WTC11 (cell line): ENCODE measurements at regions of chr3 and their contacts with region 1.

Region 1: DNA sequence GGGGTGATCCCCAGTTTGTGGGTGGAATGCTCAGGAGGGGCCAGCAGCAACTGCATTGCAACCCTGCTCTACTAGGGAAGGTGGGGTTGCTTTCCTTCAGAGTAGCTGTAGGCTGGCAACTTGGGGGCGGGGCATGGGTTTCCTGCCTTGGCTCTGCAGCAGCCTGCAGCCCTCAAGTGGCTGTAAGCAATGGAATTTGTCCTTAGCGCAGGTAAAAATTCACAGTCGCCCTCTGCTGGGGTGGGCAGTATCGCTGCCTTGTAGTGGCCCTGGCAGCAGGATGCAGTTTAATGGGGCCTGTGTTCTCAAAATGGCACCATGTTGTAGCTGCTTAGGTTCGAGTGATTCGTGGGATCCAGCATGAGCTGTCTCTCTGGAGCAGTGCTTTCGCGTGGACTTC is 29.8 kb downstream of the STT3B start:
- DNase-seq: peak; percentile 85
- ATAC-seq: peak; percentile 92
- H3K4me3 Mint-ChIP-seq: no peak overlapping the region
- H3K27ac Mint-ChIP-seq: peak overlapping the region; percentile 78; the same call in 1 of the 2 replicates
- H3K4me1 Mint-ChIP-seq: peaks cover 65% of the 10 kb centered on the region
- H3K27me3 Mint-ChIP-seq: no peaks in the 10 kb centered on the region
- CTCF ChIP-seq: no peak; the same call in 1 of the 2 replicates

Region 2: DNA sequence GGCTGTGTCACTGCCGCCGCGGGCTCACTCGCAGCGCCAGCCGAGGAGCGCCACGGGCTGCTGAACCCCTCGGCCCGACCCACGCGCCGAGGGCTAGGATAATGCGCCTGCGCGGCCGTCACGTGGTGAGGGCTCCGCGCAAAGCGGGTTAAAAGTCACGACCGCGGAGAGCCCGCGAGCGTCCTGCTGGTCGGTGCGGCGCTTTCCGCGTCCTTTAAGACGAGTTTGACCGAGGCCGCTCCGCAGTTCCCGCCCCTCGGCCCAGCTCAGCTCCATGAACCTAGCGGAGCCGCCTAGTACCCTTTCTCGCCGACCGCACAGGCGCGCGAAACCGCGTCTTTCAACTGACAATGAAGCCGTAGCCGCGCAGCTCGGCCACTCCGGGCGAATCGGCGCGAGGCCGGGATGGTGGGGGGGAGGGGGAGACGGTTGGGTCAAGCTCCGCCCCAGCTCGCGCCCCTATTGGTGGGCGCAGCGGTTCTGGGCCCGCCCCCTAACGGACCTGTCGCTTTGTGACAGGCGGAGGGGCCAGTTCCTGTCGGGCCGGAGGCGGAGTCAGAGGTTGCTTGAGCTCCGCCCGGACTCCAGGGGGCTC is 30.4 kb before region 1 on chr3:
- CTCF ChIA-PET with region 1: interaction called, 38 read pairs
- POLR2A ChIA-PET with region 1: interaction called, 4 read pairs
- DNase-seq: peak; percentile 99
- ATAC-seq: peak; percentile 95
- H3K4me3 Mint-ChIP-seq: no peak overlapping the region
- H3K27ac Mint-ChIP-seq: peak overlapping the region; percentile 98
- H3K4me1 Mint-ChIP-seq: peaks cover 25% of the 10 kb centered on the region
- H3K27me3 Mint-ChIP-seq: no peaks in the 10 kb centered on the region
- CTCF ChIP-seq: no peak

Region 3: GRCh38 chr3:31550452-31551251 is 11.9 kb before region 1 on chr3:
- CTCF ChIA-PET with region 1: interaction called, 13 read pairs
- POLR2A ChIA-PET with region 1: interaction called, 3 read pairs
- DNase-seq: no peak
- ATAC-seq: peak; percentile 73; the same call in 1 of the 2 replicates
- H3K4me3 Mint-ChIP-seq: no peak overlapping the region
- H3K27ac Mint-ChIP-seq: no peak overlapping the region
- H3K4me1 Mint-ChIP-seq: peaks cover 56% of the 10 kb centered on the region
- H3K27me3 Mint-ChIP-seq: no peaks in the 10 kb centered on the region
- CTCF ChIP-seq: no peak

Region 4: DNA sequence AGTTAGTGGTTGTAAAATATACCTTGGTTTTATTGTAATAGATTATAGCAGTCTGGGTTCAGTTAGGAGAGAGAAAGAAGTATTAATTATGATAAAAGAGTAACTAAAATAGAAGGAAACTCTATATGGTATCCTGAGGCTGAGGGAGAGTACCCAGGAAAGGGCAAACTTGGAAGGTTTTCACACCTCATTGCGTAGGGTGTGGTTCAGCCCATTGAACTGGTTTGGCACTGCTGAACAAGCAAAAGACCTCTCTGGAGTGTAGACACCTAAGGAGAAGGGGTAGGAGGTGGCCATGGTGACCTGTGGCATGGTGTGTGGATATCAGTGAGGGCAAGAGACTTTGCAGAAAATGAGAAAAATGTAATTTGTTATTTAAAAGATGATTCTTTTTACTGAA is 33.7 kb after region 1 on chr3:
- CTCF ChIA-PET with region 1: interaction called, 10 read pairs
- POLR2A ChIA-PET with region 1: no interaction called
- DNase-seq: no peak
- ATAC-seq: no peak
- H3K4me3 Mint-ChIP-seq: no peak overlapping the region
- H3K27ac Mint-ChIP-seq: peak overlapping the region; percentile 24; the same call in 1 of the 2 replicates
- H3K4me1 Mint-ChIP-seq: peaks cover 4% of the 10 kb centered on the region; the same call in 1 of the 2 replicates
- H3K27me3 Mint-ChIP-seq: no peaks in the 10 kb centered on the region
- CTCF ChIP-seq: no peak

Region 5: DNA sequence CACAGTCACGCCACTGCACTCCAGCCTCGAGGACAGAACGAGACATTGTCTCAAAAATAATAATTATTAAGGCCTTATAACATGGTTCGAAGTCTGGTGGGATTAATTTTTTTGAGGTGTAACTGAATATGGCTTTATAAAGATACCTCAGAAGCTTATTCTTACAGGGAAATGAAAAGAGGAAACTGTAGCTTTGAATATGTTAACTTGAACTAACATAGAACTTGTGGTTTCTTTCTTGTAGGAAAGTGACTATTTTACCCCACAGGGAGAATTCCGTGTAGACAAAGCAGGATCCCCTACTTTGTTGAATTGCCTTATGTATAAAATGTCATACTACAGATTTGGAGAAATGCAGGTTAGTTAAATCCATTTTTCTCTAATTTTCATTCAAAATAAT is 66.5 kb after region 1 on chr3:
- CTCF ChIA-PET with region 1: no interaction called
- POLR2A ChIA-PET with region 1: no interaction called
- DNase-seq: no peak
- ATAC-seq: no peak
- H3K4me3 Mint-ChIP-seq: no peak overlapping the region
- H3K27ac Mint-ChIP-seq: no peak overlapping the region
- H3K4me1 Mint-ChIP-seq: peaks cover 28% of the 10 kb centered on the region
- H3K27me3 Mint-ChIP-seq: no peaks in the 10 kb centered on the region
- CTCF ChIP-seq: no peak